ENCODE measurements at regions of chr19 and their contacts with region 1.

Region 1: GRCh38 chr19:52336117-52336790 is at the start of gene ZNF610:
- DNase-seq: peak; percentile 93 to 97
- ATAC-seq: peak; percentile 96
- H3K4me3 ChIP-seq: peak within 1 kb of the TSS; percentile 66 to 80
- H3K27ac ChIP-seq: peak within 1 kb of the TSS; percentile 9 to 28
- H3K4me1 ChIP-seq: no peaks in the 10 kb centered on the region
- H3K27me3 ChIP-seq: no peaks in the 10 kb centered on the region
- total RNA-seq, gene ZNF610: 2.2 to 3.2 TPM

Region 2: GRCh38 chr19:52200044-52200443 is 136.2 kb before region 1 on chr19:
- intact Hi-C with region 1: no loop called
- DNase-seq: peak; percentile 55 to 76
- ATAC-seq: peak; percentile 86
- H3K4me3 ChIP-seq: no peak overlapping the region
- H3K27ac ChIP-seq: peak overlapping the region; percentile 44 to 92
- H3K4me1 ChIP-seq: peaks cover 0 to 5% of the 10 kb centered on the region in 2 donors
- H3K27me3 ChIP-seq: no peaks in the 10 kb centered on the region

Region 3: DNA sequence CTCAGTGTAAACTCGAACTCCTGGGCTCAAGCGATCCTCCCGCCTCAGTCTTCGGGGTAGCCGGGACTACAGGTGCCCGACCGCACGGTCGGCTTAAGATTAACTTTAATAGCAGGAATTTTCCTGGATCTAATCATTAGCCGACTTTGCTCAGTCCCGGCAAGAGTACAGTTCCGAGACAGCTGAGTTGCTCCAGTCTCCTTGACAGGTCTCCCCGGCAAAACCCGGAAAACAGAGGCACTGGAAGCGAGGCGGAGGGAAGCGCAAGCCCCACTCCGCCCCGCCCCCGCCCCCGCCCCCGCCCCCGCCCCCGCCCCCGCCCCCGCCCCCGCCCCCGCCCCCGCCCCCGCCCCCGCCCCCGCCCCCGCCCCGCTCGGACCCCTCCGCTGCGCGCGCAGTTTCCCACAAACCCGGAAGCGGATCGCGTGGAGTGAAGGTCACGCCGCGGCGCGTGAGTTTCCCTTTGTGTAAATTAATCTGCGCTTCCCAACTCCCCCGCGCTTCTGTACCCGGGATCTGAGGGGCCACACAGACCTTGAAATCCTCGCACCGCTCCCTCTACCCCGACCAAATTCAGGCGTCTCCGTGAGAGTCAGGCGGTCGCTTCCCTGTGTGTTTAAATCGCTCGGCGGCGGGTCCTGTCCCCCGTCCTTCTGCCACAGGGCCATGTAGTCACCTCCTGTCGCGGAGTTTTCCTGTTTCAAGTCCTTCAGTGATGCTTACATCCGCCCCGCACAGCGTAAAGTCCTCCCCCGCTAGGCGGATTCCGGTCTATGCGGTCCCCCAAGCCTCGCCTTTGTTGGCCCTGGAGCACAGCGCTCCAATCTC is 39.3 kb before region 1 on chr19 and contains the start of gene ZNF480:
- intact Hi-C with region 1: loop called in 1 of 2 experiments (anchors 5 kb)
- DNase-seq: peak; percentile 91 to 95
- ATAC-seq: peak; percentile 92
- H3K4me3 ChIP-seq: peak within 1 kb of the TSS; percentile 49 to 60
- H3K27ac ChIP-seq: peak within 1 kb of the TSS in 1 of 2 donors; percentile 87
- H3K4me1 ChIP-seq: no peaks in the 10 kb centered on the region
- H3K27me3 ChIP-seq: no peaks in the 10 kb centered on the region
- total RNA-seq, gene ZNF480: 10.0 to 15.7 TPM

Region 4: DNA sequence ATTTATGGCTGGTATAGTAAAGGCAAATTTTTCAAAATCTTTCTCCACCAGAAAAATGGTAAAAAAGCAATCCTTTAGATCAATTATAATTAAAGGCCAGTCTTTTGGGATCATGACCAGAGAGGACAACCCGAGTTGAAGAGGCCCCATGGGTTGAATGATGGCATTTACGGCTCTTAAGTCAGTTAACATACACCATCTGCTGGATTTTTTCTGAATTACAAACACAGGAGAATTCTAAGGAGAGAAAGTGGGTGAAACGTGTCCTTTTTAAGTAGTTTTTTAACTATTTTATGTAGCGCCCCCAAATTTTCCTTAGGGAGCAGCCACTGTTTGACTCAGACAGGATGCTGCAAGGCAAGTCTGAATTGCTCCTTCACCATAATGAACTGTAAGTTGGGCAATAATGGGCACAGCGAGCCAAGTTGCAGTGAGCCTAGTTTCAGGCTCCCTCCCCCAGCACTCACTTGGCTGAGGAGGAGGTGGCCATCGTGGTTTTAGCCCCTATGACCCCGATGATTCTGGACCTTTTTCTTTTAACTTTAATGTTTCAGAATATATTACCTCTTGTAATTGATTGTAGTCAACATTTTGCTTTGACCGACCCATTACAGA is 412.2 kb after region 1 on chr19:
- intact Hi-C with region 1: loop called in 1 of 2 experiments (anchors 10 kb)
- DNase-seq: no peak
- ATAC-seq: no peak
- H3K4me3 ChIP-seq: no peak overlapping the region
- H3K27ac ChIP-seq: no peak overlapping the region
- H3K4me1 ChIP-seq: no peaks in the 10 kb centered on the region
- H3K27me3 ChIP-seq: no peaks in the 10 kb centered on the region

Measured in aorta (tissue), 5 donors.